GM12878 (cell line): ENCODE measurements at regions of chr6 and their contacts with region 1.

Region 1: DNA sequence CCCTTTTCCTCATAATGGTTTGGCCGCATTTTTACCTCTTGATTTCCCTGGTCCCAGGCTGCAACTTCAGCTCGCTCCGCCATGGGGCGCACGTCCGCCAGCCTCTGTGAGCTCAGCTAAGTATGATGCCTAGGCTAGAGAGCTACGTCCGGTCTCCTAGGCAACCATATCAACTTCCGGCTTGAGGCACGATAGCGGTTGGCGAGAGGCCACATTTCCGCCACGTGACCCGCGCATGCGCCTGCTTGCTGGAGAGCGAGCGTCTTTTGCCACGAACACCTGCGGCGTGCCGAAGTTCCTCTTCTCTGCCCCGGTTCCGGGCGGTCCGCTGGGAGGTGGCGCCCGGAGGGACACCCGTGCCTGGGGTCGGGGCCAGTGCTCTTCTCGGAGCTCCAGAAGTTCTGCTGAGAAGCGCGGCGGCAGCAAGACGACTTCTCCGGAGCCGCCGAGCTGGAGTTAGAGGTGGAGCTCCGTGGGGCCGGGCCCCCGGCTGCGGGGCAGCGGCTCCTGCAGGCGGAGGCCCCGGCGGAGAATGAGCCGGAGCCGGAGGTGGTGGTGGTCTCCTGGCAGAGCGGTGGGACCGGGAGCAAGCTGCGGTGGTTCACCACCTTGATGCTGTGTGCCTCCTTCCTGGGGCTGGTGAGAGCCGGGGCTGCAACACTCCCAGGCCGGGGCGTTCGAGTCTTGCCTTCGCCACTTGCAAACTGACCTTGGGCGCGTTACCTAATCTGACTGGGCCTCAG is 172.0 kb downstream of the SLC16A10 start:
- DNase-seq: peak; percentile 99
- ATAC-seq: peak; percentile 97
- H3K4me3 ChIP-seq: peak overlapping the region; percentile 72
- H3K27ac ChIP-seq: peak overlapping the region; percentile 90
- H3K4me1 ChIP-seq: no peaks in the 10 kb centered on the region
- H3K27me3 ChIP-seq: no peaks in the 10 kb centered on the region
- CTCF ChIP-seq: peak; percentile 95 to 99 (median 97); a peak in 5 of 6 replicates
- EP300 ChIP-seq: peak in 1 of 2 experiments; percentile 88; a peak in 2 of 4 replicates
- POLR2A ChIP-seq: peak; percentile 95
- RAD21 ChIP-seq: peak; percentile 93

Region 2: DNA sequence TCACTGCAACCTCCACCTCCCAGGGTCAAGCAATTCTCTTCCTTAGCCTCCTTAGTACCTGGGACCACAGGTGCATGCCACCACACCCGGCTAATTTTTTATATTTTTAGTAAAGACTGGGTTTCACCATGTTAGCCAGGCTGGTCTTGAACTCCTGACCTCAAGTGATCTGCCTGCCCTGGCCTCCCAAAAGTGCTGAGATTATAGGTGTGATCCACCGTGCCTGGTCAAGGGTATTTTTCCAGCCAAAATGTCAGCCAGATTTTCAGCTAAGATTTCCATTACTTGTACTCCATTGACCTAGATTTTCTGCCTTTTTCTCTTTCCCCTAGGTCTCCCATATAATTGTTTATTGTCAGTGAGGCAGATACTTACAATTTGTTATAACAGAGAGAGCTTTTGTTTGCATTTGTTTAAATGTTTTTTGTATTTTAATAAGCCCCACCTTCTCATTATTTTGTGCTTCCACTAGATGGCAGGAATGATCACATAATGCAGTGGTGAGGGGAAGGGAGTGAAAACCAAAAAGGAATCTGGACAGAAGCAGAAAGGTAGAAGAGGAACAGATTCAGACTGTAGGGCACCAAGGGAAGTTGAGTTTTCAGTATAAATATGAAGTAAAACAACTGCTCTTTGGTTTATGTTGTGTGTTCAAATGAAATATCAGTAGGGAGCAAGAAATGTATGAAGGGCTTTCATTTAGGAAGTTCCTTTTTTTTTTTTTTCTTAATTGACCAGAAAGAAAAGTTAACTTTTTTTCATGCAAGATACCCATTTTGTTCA is 247.7 kb before region 1 on chr6:
- CTCF ChIA-PET with region 1: interaction called, 13 read pairs
- POLR2A ChIA-PET with region 1: no interaction called
- RAD21 ChIA-PET with region 1: interaction called, 8 read pairs
- SMC1A ChIA-PET with region 1: interaction called, 4 read pairs
- in situ Hi-C with region 1: no loop called
- intact Hi-C with region 1: no loop called
- DNase-seq: peak; percentile 15
- ATAC-seq: peak; percentile 90
- H3K4me3 ChIP-seq: no peak overlapping the region
- H3K27ac ChIP-seq: no peak overlapping the region
- H3K4me1 ChIP-seq: no peaks in the 10 kb centered on the region
- H3K27me3 ChIP-seq: no peaks in the 10 kb centered on the region
- CTCF ChIP-seq: peak; percentile 51 to 75 (median 53); a peak in 5 of 6 replicates
- EP300 ChIP-seq: no peak
- POLR2A ChIP-seq: no peak
- RAD21 ChIP-seq: peak; percentile 93

Region 3: GRCh38 chr6:111076024-111076695 is 183.1 kb before region 1 on chr6:
- CTCF ChIA-PET with region 1: no interaction called
- POLR2A ChIA-PET with region 1: no interaction called
- RAD21 ChIA-PET with region 1: no interaction called
- SMC1A ChIA-PET with region 1: no interaction called
- in situ Hi-C with region 1: no loop called
- intact Hi-C with region 1: no loop called
- DNase-seq: no peak
- ATAC-seq: peak; percentile 45
- H3K4me3 ChIP-seq: no peak overlapping the region
- H3K27ac ChIP-seq: no peak overlapping the region
- H3K4me1 ChIP-seq: no peaks in the 10 kb centered on the region
- H3K27me3 ChIP-seq: no peaks in the 10 kb centered on the region
- CTCF ChIP-seq: no peak
- EP300 ChIP-seq: no peak
- POLR2A ChIP-seq: no peak
- RAD21 ChIP-seq: no peak

Region 4: DNA sequence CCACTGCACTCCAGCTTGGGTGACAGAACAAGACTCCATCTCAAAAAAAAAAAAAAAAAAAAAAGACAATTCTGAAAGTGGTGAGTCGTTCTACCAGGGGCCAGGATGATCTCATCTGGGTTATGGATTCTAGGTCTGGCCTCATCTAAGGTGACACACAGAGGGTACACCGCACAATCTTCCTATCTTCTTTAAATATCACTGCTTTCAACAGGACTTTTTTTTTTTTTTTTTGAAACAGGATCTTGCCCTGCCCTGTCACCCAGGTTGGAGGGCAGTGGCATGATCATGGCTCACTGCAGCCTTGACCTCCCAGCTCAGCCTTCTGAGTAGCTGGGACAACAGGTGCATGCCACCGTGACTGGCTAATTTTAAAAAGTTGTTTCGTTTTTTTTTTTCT is 104.3 kb before region 1 on chr6:
- CTCF ChIA-PET with region 1: no interaction called
- POLR2A ChIA-PET with region 1: no interaction called
- RAD21 ChIA-PET with region 1: no interaction called
- SMC1A ChIA-PET with region 1: no interaction called
- in situ Hi-C with region 1: no loop called
- intact Hi-C with region 1: no loop called
- DNase-seq: no peak
- ATAC-seq: no peak
- H3K4me3 ChIP-seq: no peak overlapping the region
- H3K27ac ChIP-seq: no peak overlapping the region
- H3K4me1 ChIP-seq: peaks cover 5% of the 10 kb centered on the region
- H3K27me3 ChIP-seq: no peaks in the 10 kb centered on the region
- CTCF ChIP-seq: no peak
- EP300 ChIP-seq: no peak
- POLR2A ChIP-seq: no peak
- RAD21 ChIP-seq: no peak

Region 5: GRCh38 chr6:111338843-111339242 is 79.6 kb after region 1 on chr6:
- CTCF ChIA-PET with region 1: interaction called, 11 read pairs
- POLR2A ChIA-PET with region 1: no interaction called
- RAD21 ChIA-PET with region 1: interaction called, 10 read pairs
- SMC1A ChIA-PET with region 1: interaction called, 10 read pairs
- in situ Hi-C with region 1: no loop called
- intact Hi-C with region 1: loop called (anchors 5 kb)
- DNase-seq: peak; percentile 78
- ATAC-seq: peak; percentile 99
- H3K4me3 ChIP-seq: no peak overlapping the region
- H3K27ac ChIP-seq: peak overlapping the region; percentile 16
- H3K4me1 ChIP-seq: no peaks in the 10 kb centered on the region
- H3K27me3 ChIP-seq: no peaks in the 10 kb centered on the region
- CTCF ChIP-seq: no peak
- EP300 ChIP-seq: peak; percentile 35 to 74; a peak in 2 of 4 replicates
- POLR2A ChIP-seq: no peak
- RAD21 ChIP-seq: no peak

Region 6: DNA sequence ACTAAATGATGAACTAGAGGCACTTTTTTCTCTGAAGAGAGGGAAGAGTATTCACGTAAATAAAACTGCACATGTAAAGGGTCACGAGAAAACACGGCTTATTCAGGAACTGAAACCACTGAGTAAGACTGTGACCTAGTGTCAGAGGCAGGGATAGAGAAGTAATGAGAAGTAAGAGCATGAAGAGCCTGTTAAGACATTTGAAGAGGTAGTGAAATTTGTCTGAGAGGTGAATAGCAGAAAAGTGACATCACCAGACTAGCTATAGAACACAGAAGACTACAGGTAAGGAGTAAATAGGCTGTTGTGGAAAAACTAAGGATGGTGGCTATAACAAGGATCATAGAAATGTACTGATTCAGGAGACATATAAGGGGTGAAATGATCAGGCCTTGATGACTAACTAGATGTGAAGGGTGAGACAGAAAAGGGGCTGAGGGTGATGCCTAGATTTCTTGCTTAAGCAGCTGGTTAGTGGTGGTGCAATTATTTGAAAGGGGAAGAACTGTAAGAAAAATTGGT is 147.0 kb after region 1 on chr6:
- CTCF ChIA-PET with region 1: interaction called, 13 read pairs
- POLR2A ChIA-PET with region 1: interaction called, 4 read pairs
- RAD21 ChIA-PET with region 1: interaction called, 30 read pairs
- SMC1A ChIA-PET with region 1: interaction called, 9 read pairs
- in situ Hi-C with region 1: no loop called
- intact Hi-C with region 1: loop called (anchors 1 kb)
- DNase-seq: peak; percentile 96
- ATAC-seq: peak; percentile 94
- H3K4me3 ChIP-seq: no peak overlapping the region
- H3K27ac ChIP-seq: peak overlapping the region; percentile 59
- H3K4me1 ChIP-seq: peaks cover 28% of the 10 kb centered on the region
- H3K27me3 ChIP-seq: no peaks in the 10 kb centered on the region
- CTCF ChIP-seq: no peak
- EP300 ChIP-seq: peak; percentile 98 to 100; a peak in 3 of 4 replicates
- POLR2A ChIP-seq: no peak
- RAD21 ChIP-seq: peak; percentile 37; the same call in 1 of the 2 replicates

Region 7: DNA sequence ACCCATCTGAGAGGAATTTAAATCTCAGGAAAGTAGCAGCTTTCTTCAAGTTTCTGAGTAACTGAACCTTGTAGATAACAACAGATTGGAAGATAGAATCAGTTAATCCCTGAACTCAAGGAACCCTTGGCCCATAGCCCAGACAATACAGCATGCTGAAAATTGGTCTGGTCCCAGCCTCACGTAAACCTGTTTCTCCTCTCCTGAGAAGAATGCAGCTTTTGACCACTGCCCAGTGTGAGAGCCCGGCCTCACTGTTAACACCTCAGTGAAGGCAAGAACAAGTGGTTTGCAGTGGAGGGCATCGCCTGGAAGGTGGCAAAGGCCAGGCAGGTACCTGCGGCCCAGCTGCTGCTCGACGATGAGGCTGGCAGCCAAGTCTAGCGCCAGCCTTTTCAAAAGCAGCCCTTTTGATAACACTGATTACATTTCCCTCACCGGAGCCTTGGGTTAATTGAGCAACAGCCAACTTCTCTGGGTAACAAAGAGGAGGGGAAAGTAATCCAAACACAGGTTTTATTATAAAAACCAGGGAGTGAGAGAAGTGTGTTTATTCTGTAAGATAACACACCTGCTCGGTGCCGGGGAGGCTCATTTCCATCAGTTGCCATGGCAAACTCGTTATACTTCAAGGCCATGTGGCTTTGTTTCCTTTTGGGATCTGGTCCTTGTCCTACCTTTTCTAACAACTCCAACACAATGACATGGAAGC is 292.4 kb after region 1 on chr6:
- CTCF ChIA-PET with region 1: interaction called, 13 read pairs
- POLR2A ChIA-PET with region 1: no interaction called
- RAD21 ChIA-PET with region 1: interaction called, 4 read pairs
- SMC1A ChIA-PET with region 1: interaction called, 5 read pairs
- in situ Hi-C with region 1: no loop called
- intact Hi-C with region 1: no loop called
- DNase-seq: no peak
- ATAC-seq: no peak
- H3K4me3 ChIP-seq: no peak overlapping the region
- H3K27ac ChIP-seq: no peak overlapping the region
- H3K4me1 ChIP-seq: no peaks in the 10 kb centered on the region
- H3K27me3 ChIP-seq: no peaks in the 10 kb centered on the region
- CTCF ChIP-seq: no peak
- EP300 ChIP-seq: no peak
- POLR2A ChIP-seq: no peak
- RAD21 ChIP-seq: no peak

Region 8: GRCh38 chr6:111642463-111643158 is 383.4 kb after region 1 on chr6:
- CTCF ChIA-PET with region 1: interaction called, 47 read pairs
- POLR2A ChIA-PET with region 1: interaction called, 3 read pairs
- RAD21 ChIA-PET with region 1: interaction called, 42 read pairs
- SMC1A ChIA-PET with region 1: interaction called, 23 read pairs
- in situ Hi-C with region 1: loop called (anchors 5 kb)
- intact Hi-C with region 1: loop called (anchors 1 kb)
- DNase-seq: peak; percentile 21
- ATAC-seq: peak; percentile 95
- H3K4me3 ChIP-seq: no peak overlapping the region
- H3K27ac ChIP-seq: no peak overlapping the region
- H3K4me1 ChIP-seq: no peaks in the 10 kb centered on the region
- H3K27me3 ChIP-seq: no peaks in the 10 kb centered on the region
- CTCF ChIP-seq: peak; percentile 57 to 77 (median 65)
- EP300 ChIP-seq: no peak
- POLR2A ChIP-seq: no peak
- RAD21 ChIP-seq: peak; percentile 75